CD8-positive, alpha-beta T cell (primary cell): ENCODE measurements at regions of chr1 and their contacts with region 1.

Region 1: GRCh38 chr1:9292361-9293240 is at the start of gene SPSB1:
- DNase-seq: peak; percentile 33 to 83 (median 66)
- ATAC-seq: peak; percentile 68
- H3K4me3 ChIP-seq: peak within 1 kb of the TSS; percentile 45 to 61
- H3K4me3 Mint-ChIP-seq: peak within 1 kb of the TSS; percentile 73
- H3K27ac ChIP-seq: no peak within 1 kb of the TSS
- H3K27ac Mint-ChIP-seq: no peak within 1 kb of the TSS
- H3K4me1 ChIP-seq: peaks cover 17% of the 10 kb centered on the region
- H3K4me1 Mint-ChIP-seq: peaks cover 10% of the 10 kb centered on the region
- H3K27me3 ChIP-seq: peaks cover 0 to 4% of the 10 kb centered on the region in 2 experiments
- H3K27me3 Mint-ChIP-seq: no peaks in the 10 kb centered on the region
- CTCF ChIP-seq: no peak
- total RNA-seq, gene SPSB1: 1.6 to 2.2 TPM

Region 2: DNA sequence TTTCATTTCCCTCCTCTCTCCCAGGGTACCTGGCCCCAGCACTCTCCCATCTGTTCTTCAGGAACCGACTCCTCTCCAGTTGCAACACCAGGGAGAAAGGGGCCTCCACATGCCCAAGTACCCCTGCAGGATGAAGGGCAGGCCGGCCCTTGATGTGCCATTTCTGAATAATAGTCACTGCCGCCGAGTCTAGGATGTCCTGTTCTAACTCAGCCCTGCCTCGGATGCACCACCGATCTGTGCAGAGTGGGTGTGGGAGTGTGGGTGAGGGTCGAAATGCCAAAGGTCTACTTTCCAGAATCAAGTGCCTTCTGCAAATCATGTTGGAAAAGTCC is 25.3 kb before region 1 on chr1:
- CTCF ChIA-PET with region 1: interaction called, 5 read pairs
- POLR2A ChIA-PET with region 1: no interaction called
- intact Hi-C with region 1: loop called (anchors 1 to 2 kb)
- DNase-seq: no peak
- ATAC-seq: no peak
- H3K4me3 ChIP-seq: no peak overlapping the region
- H3K4me3 Mint-ChIP-seq: no peak overlapping the region
- H3K27ac ChIP-seq: no peak overlapping the region
- H3K27ac Mint-ChIP-seq: no peak overlapping the region
- H3K4me1 ChIP-seq: no peaks in the 10 kb centered on the region
- H3K4me1 Mint-ChIP-seq: peaks cover 9% of the 10 kb centered on the region
- H3K27me3 ChIP-seq: no peaks in the 10 kb centered on the region
- H3K27me3 Mint-ChIP-seq: no peaks in the 10 kb centered on the region
- CTCF ChIP-seq: no peak

Region 3: GRCh38 chr1:9573723-9574122 is 281.1 kb after region 1 on chr1:
- CTCF ChIA-PET with region 1: interaction called, 3 read pairs
- POLR2A ChIA-PET with region 1: no interaction called
- intact Hi-C with region 1: loop called (anchors 2 to 5 kb)
- DNase-seq: peak in 2 of 9 experiments; percentile 26 to 48
- ATAC-seq: no peak
- H3K4me3 ChIP-seq: no peak overlapping the region
- H3K4me3 Mint-ChIP-seq: no peak overlapping the region
- H3K27ac ChIP-seq: no peak overlapping the region
- H3K27ac Mint-ChIP-seq: no peak overlapping the region
- H3K4me1 ChIP-seq: no peaks in the 10 kb centered on the region
- H3K4me1 Mint-ChIP-seq: no peaks in the 10 kb centered on the region
- H3K27me3 ChIP-seq: no peaks in the 10 kb centered on the region
- H3K27me3 Mint-ChIP-seq: no peaks in the 10 kb centered on the region
- CTCF ChIP-seq: no peak